HEK293 (cell line): ENCODE measurements at regions of chr2 and their contacts with region 1.

Region 1: DNA sequence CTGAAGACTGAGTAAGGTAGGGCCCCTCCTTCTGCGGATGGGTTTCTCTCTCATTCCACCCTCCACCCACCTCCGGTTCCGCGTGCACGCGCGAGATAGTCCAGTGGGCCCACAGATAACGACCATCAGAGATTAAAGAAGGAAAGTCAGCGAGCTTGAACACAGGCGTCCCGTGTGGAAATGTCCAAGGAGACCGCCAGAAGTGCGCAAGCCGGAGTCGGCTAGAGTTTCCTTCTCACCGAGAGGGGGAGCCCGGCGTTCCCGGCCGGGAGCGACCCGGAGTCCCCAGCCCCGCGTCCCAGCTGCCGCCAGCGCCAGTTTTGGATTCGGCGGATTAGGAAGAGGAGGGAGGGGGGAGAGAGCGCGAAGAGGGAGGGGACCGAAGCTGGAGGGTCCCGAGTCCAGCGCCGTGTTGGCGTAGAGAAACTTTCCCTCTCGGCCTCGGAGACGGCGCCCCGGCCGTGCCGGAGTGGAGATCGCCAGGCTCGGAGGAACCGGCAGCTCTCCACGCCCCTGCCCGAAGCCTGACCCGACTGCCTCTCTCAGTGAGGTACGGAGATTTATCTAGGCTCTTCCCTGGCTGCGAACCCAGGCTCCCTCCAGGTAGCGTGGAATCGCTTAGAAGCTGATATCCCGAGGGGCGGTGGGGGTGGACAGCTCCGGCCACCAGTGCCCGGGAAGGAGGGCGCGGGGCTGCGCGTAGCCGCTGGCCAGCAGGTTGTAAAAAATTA is at the start of gene GULP1:
- H3K4me3 ChIP-seq: peak within 1 kb of the TSS; percentile 82
- H3K27ac ChIP-seq: peak within 1 kb of the TSS; percentile 88
- H3K4me1 ChIP-seq: peaks cover 12% of the 10 kb centered on the region
- CTCF ChIP-seq: peak; percentile 85

Region 2: DNA sequence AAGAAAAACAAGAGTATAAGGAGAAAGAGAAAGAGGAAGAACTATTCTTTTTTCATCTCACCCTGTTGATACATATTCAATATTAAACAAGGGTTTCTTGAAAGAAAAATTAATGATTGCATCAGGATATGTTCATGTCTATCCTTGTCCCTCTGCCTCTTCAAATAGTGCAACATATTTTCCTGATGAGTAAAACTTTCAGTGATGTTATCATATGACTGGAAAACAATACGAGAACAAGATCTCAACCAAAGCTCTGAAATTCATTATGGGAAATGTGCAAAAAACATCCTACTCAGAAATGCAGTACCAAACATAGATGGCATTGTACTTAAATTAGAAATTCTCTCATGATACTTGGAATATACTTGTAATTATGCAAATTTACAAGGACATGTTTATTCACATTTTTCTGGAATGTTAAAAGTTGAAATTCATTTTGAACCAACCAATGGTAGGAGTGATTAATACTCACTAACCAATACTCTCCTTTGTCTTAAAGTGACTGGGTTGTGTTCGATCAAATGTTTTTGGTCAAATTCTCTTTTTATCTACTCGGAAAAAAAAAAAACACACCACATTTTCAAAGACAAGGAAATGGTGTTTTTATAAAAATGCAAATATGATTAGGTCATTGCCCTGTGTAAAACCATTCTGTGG is 149.0 kb before region 1 on chr2:
- CTCF ChIA-PET with region 1: no interaction called
- POLR2A ChIA-PET with region 1: no interaction called
- H3K4me3 ChIP-seq: no peak overlapping the region
- H3K27ac ChIP-seq: no peak overlapping the region
- H3K4me1 ChIP-seq: no peaks in the 10 kb centered on the region
- CTCF ChIP-seq: no peak

Region 3: DNA sequence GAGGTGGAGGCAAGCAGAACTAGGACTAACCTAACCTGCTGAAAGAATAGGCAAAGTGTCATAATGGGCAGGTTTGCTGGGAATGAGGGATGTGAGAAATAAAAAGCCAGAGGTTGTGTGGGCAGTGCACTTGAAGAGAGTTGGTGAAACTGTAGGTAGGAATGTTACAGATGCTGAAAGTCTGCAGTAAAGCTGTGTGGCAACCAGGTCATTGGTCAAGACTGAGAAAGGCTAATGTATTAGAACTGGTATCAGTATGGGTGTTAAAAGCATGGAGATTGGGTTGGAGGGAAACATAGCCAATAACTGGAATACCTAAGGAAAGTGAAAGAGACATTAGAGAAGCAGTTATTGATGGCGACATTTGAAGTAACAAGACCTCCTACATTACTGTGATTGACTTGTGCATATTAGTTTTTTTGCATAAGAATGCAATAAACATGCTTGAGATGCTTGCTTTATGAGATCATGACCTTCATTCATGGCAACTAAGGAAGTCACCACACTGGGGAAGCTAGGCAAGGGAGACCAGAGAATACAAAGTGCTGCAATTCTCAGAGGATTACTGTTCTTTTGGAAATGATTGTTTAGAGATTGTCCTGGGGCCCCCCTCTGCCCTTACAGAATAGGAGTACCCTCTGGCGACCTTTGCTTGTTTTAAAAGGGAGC is 11.7 kb after region 1 on chr2:
- CTCF ChIA-PET with region 1: interaction called, 5 read pairs
- POLR2A ChIA-PET with region 1: interaction called, 22 read pairs
- H3K4me3 ChIP-seq: no peak overlapping the region
- H3K27ac ChIP-seq: no peak overlapping the region
- H3K4me1 ChIP-seq: peaks cover 5% of the 10 kb centered on the region
- CTCF ChIP-seq: no peak

Region 4: DNA sequence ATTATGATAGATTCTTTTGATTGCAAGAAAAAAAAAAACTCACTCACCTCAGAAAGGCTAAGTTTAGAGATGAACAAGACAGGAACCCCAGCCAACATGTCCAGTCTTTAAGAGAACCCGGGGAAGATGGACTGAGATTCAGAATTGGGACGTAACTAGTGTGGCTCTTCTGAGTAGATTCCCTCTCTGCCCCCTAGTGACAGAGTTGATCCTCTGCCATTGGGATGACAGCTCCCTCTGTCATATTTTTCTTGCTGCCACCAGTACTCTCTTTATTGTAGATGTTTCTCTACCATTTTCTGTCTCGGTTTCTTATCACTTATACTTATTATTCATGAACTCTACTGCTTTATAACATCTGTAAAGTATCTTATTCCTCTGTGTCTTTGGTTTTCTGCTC is 77.6 kb after region 1 on chr2:
- CTCF ChIA-PET with region 1: interaction called, 10 read pairs
- POLR2A ChIA-PET with region 1: interaction called, 5 read pairs
- H3K4me3 ChIP-seq: no peak overlapping the region
- H3K27ac ChIP-seq: no peak overlapping the region
- H3K4me1 ChIP-seq: no peaks in the 10 kb centered on the region
- CTCF ChIP-seq: 0 out of 2 replicates have a peak, but pooled peaks have one; percentile 41